BJ (cell line): ENCODE measurements at regions of chr15 and their contacts with region 1.

Region 1: DNA sequence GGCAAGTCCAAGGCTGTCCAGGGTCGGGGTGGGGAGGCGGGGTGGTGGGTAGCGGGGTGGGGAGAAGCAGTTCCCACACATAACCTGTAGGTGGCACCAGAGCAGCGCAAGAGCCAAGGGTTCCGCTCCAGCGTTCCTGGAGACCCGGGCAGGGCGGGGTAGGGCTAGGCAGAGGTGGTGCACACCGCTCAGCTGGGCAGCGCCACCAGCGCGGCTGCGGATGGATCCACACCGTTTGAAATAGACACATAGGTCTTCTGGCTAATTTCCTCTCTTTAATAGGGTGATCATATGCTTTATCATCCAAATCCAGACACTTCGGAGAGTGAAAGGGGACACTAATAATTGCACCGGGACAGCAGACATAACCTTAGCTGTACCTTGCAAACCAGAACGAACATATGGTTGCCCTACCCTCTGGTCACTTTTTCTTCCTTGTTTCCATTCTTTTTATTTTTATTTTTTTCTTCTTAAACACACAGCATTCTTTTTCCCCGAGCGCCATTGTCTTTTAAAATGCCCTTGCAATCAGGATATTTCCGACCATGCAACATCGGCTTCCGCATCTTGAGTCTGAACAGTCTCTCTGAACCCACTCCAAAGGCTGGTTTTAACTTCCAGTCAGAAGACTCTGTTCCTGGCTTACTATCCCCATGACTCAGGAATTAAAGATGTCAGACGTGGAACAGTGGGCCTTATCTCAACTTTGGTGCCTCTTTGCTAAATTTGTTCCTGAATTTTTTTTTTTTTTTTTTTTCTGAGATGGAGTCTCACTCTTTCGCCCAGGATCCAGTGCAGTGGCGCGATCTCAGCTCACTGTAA is 12.5 kb upstream of the ZSCAN2 start:
- DNase-seq: no peak
- H3K4me3 ChIP-seq: peak overlapping the region; percentile 39
- H3K27me3 ChIP-seq: peaks cover 2% of the 10 kb centered on the region
- CTCF ChIP-seq: peak; percentile 85

Region 2: DNA sequence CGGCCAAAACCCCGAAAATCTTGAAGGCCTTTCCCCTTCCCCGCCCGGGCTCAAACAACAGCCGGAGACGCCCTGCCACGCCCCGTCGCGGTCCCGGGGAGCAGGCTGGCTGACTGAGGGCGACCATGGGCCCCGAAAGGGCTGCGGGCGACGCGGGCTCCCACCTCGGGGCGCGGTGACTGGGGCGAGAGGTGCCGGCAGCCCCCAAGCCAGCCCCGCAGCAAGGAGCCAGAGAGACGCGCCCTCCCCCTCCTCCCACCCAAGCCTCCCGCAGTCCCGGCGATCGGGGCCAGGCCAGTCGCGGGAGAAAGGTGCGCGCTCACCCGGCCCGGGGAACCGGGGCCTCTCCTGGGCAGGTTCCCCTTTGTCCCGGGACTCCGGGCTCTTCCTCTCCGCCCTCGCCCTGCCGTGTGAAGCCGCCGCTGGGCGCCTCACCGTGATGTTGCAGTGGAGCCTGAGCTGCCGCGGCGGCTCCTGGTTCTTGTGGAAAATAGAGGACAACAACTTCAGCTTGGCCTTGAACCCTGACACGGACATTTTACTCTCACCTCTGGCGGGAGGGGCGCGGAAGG is 18.0 kb before region 1 on chr15:
- CTCF ChIA-PET with region 1: interaction called, 34 read pairs
- POLR2A ChIA-PET with region 1: no interaction called
- DNase-seq: no peak
- H3K4me3 ChIP-seq: peak overlapping the region; percentile 86
- H3K27me3 ChIP-seq: no peaks in the 10 kb centered on the region
- CTCF ChIP-seq: no peak

Region 3: DNA sequence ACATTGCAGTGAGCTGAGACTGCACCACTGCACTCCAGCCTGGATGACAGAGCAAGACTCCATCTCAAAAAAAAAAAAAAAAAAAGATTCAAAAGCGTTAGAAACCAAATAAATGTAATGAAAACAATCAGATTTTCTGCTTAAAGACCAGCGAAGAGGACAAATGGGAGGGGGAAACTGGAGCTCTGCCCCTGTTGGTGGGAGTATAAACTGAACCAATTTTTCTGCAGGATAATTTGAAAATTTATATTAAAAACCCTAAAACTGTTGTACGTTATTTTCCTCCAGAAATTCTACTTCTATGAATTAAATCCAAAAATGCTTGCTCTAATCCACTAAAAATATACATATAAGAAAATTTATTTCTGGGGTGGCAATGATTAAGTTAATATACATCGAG is 12.8 kb before region 1 on chr15:
- CTCF ChIA-PET with region 1: interaction called, 34 read pairs
- POLR2A ChIA-PET with region 1: no interaction called
- DNase-seq: no peak
- H3K4me3 ChIP-seq: no peak overlapping the region
- H3K27me3 ChIP-seq: no peaks in the 10 kb centered on the region
- CTCF ChIP-seq: no peak

Region 4: GRCh38 chr15:84600851-84601838 is 12.9 kb after region 1 on chr15 and contains the start of gene ZSCAN2:
- CTCF ChIA-PET with region 1: interaction called, 23 read pairs
- POLR2A ChIA-PET with region 1: no interaction called
- DNase-seq: peak; percentile 59
- H3K4me3 ChIP-seq: peak within 1 kb of the TSS; percentile 97
- H3K27me3 ChIP-seq: no peaks in the 10 kb centered on the region
- CTCF ChIP-seq: no peak
- polyA plus RNA-seq, gene ZSCAN2: 5.9 and 6.3 TPM in 2 replicates

Region 5: GRCh38 chr15:85289677-85290365 is 701.6 kb after region 1 on chr15:
- CTCF ChIA-PET with region 1: interaction called, 10 read pairs
- POLR2A ChIA-PET with region 1: no interaction called
- DNase-seq: no peak
- H3K4me3 ChIP-seq: no peak overlapping the region
- H3K27me3 ChIP-seq: peaks cover 4% of the 10 kb centered on the region
- CTCF ChIP-seq: peak; percentile 52